ENCODE measurements at regions of chr7 and their contacts with region 1.

Region 1: GRCh38 chr7:35716038-35716803 is 21.3 kb upstream of the HERPUD2 start:
- DNase-seq: no peak
- ATAC-seq: no peak
- H3K4me3 ChIP-seq: no peak overlapping the region
- H3K4me3 Mint-ChIP-seq: no peak overlapping the region
- H3K27ac ChIP-seq: no peak overlapping the region
- H3K27ac Mint-ChIP-seq: peak overlapping the region; percentile 16
- H3K4me1 ChIP-seq: peaks cover 13 to 16% of the 10 kb centered on the region in 2 donors
- H3K4me1 Mint-ChIP-seq: peaks cover 27% of the 10 kb centered on the region
- H3K27me3 ChIP-seq: no peaks in the 10 kb centered on the region
- H3K27me3 Mint-ChIP-seq: no peaks in the 10 kb centered on the region
- CTCF ChIP-seq: no peak

Region 2: DNA sequence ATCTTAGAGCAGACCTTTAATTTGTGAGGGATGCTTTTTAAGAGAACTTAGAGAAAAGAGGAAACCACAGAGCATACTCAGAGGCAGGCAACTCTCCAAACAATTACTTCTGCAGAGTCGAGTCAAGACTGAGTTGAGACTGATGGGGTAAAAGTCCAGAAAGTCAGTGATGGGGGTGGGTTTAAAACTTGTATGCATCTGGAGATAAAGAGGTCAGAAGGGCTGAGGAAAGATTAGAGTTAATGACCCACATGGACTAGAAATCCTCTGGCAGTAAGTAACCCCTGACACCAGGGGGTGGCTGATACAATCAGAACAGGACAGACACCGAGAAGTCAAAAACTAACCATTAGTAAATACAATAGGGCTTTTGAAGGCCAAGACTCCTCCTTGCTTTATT is 42.2 kb after region 1 on chr7:
- CTCF ChIA-PET with region 1: interaction called, 4 read pairs
- POLR2A ChIA-PET with region 1: no interaction called
- intact Hi-C with region 1: loop called (anchors 5 kb)
- DNase-seq: peak; percentile 30
- ATAC-seq: no peak
- H3K4me3 ChIP-seq: no peak overlapping the region
- H3K4me3 Mint-ChIP-seq: no peak overlapping the region
- H3K27ac ChIP-seq: no peak overlapping the region
- H3K27ac Mint-ChIP-seq: no peak overlapping the region
- H3K4me1 ChIP-seq: peaks cover 0 to 3% of the 10 kb centered on the region in 2 donors
- H3K4me1 Mint-ChIP-seq: peaks cover 7% of the 10 kb centered on the region
- H3K27me3 ChIP-seq: no peaks in the 10 kb centered on the region
- H3K27me3 Mint-ChIP-seq: no peaks in the 10 kb centered on the region
- CTCF ChIP-seq: no peak

Region 3: GRCh38 chr7:35839860-35840854 is 123.9 kb after region 1 on chr7:
- CTCF ChIA-PET with region 1: no interaction called
- POLR2A ChIA-PET with region 1: no interaction called
- intact Hi-C with region 1: no loop called
- DNase-seq: no peak
- ATAC-seq: no peak
- H3K4me3 ChIP-seq: no peak overlapping the region
- H3K4me3 Mint-ChIP-seq: no peak overlapping the region
- H3K27ac ChIP-seq: peak overlapping the region in 1 of 2 donors; percentile 12
- H3K27ac Mint-ChIP-seq: no peak overlapping the region
- H3K4me1 ChIP-seq: no peaks in the 10 kb centered on the region
- H3K4me1 Mint-ChIP-seq: peaks cover 23% of the 10 kb centered on the region
- H3K27me3 ChIP-seq: no peaks in the 10 kb centered on the region
- H3K27me3 Mint-ChIP-seq: no peaks in the 10 kb centered on the region
- CTCF ChIP-seq: no peak